Activated CD4-positive, alpha-beta T cell treated with anti-CD3 and anti-CD28 coated beads, Interleukin-2, amount 10 ng/mL, durations not matched to agents 24 days and 14 days (primary cell): ENCODE measurements at regions of chr9 and their contacts with region 1.

Region 1: DNA sequence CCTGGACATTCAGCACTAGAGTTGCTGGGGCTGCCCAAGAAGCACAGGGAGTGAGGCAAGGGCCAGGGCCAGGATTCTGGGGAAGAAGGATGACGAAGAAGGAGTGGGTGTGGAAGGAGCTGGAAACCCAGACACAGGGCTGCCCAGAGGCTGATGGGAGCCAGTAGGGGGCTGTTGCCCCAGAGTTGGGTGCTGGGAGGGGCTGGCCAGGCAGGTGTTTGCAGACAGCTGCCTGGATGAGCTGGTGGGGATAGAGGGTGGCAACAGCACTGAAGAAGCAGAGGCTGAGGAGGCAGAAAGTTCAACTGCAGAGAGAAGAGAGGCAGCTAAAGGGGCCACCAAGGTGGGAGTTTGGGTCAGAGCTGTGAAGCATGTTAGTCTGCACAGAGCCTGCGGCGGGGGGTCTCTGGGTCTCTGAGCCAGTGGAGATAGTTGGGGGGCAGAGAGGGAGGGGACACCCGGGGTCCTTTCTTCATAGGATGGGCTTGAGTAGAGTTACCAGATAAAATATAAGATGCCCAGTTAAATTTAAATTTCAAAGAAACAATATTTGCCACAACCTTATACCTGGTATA is 2.5 kb upstream of the AQP7 start:
- DNase-seq: no peak
- H3K4me3 Mint-ChIP-seq: no peak overlapping the region
- H3K27ac Mint-ChIP-seq: no peak overlapping the region
- H3K4me1 Mint-ChIP-seq: peaks cover 5% of the 10 kb centered on the region
- H3K27me3 Mint-ChIP-seq: peaks cover 6% of the 10 kb centered on the region

Region 2: GRCh38 chr9:33517373-33517772 is 112.5 kb after region 1 on chr9:
- intact Hi-C with region 1: loop called (anchors 2 kb)
- DNase-seq: no peak
- H3K4me3 Mint-ChIP-seq: no peak overlapping the region
- H3K27ac Mint-ChIP-seq: no peak overlapping the region
- H3K4me1 Mint-ChIP-seq: no peaks in the 10 kb centered on the region
- H3K27me3 Mint-ChIP-seq: peaks cover 36% of the 10 kb centered on the region